BJ (cell line): ENCODE measurements at regions of chr1 and their contacts with region 1.

Region 1: GRCh38 chr1:235077571-235078479 is 50.8 kb downstream of the TOMM20 start:
- DNase-seq: no peak
- H3K4me3 ChIP-seq: no peak overlapping the region
- H3K27me3 ChIP-seq: no peaks in the 10 kb centered on the region
- CTCF ChIP-seq: no peak

Region 2: GRCh38 chr1:234486498-234487448 is 591.1 kb before region 1 on chr1:
- CTCF ChIA-PET with region 1: interaction called, 31 read pairs
- POLR2A ChIA-PET with region 1: no interaction called
- DNase-seq: peak; percentile 49
- H3K4me3 ChIP-seq: no peak overlapping the region
- H3K27me3 ChIP-seq: 0 out of 2 replicates have a peak, but pooled peaks cover 1% of the 10 kb centered on the region
- CTCF ChIP-seq: peak; percentile 71

Region 3: DNA sequence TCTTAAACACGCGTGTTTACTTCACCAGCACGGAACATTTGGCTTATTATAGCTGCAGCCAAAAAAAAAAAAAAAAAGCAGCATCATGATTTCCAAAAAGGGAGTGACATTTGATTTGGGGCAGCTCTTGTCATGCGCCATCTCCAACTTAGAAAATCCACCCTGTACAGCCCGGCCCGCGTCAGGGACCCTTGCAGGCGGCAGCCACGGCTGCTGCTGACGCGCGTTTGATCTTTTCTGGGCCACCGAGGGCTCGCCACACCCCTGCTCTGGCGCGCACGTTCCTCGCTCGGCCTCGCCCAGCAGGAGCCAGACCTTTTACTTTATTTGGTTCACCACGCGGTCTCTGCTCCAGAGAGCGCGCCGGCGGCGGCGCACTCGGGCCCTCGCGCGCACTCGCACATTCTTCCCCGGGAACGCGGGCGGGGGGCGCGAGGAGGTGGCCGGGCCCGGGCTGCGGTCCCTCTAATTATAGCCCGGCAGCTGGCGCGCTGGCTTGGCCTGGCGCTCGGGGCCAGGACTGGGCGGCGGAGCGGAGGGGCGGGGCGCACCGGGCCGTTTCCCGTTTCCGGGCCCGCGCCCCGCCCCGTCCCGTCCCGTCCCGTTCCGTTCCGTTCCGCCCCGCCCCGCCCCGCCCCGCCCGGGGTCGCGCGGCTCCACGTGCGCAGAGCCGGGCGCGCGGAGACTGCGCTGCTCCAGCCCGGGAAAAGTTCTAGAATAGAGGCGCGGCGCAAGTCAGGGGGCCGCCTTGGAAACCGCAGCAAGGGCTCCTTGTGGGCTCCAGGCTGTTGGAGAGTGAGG is 478.0 kb before region 1 on chr1:
- CTCF ChIA-PET with region 1: interaction called, 16 read pairs
- POLR2A ChIA-PET with region 1: no interaction called
- DNase-seq: no peak
- H3K4me3 ChIP-seq: peak overlapping the region; percentile 51
- H3K27me3 ChIP-seq: no peaks in the 10 kb centered on the region
- CTCF ChIP-seq: 0 out of 2 replicates have a peak, but pooled peaks have one; percentile 9

Region 4: DNA sequence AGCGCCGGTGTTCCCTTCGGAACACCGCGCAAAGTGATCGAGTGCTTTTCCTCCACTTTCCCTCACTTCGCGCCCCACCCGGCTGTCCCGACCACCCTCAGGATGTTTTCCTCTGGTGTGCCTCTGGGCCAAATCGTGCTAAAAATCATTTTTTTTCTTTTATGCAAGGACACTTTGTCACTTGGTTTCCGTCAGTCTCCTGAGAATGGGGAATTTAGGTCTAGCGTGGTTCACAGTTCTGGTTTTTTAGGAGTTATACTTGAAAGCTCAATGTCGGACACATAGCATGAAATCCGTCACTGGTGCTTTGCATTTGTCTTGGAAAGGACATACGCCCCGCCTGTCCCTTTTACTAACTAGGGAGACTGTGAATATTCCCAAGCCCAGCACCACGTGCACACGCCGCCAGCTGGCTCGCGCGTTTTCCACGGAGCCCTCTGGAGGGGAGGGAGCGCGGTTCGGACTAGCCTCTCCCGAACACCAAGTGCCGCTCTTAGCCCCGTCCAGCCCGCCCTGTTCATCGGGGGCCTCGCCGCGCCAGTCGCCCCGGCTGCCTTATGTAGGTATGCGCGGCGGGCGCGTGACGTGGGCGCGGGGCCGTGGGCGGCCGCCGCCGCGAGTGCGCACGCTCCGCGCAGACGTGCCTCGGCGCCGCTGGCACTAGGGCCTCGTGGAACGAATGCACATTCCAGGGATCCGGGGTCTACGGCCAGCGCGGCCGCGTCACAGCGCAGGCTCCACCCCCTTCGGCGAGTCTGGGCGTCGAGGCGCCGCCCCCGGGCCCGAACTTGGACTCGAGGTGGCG is 467.3 kb before region 1 on chr1:
- CTCF ChIA-PET with region 1: interaction called, 27 read pairs
- POLR2A ChIA-PET with region 1: no interaction called
- DNase-seq: peak; percentile 68
- H3K4me3 ChIP-seq: peak overlapping the region; percentile 77
- H3K27me3 ChIP-seq: no peaks in the 10 kb centered on the region
- CTCF ChIP-seq: peak; percentile 19; the same call in 1 of the 2 replicates

Region 5: DNA sequence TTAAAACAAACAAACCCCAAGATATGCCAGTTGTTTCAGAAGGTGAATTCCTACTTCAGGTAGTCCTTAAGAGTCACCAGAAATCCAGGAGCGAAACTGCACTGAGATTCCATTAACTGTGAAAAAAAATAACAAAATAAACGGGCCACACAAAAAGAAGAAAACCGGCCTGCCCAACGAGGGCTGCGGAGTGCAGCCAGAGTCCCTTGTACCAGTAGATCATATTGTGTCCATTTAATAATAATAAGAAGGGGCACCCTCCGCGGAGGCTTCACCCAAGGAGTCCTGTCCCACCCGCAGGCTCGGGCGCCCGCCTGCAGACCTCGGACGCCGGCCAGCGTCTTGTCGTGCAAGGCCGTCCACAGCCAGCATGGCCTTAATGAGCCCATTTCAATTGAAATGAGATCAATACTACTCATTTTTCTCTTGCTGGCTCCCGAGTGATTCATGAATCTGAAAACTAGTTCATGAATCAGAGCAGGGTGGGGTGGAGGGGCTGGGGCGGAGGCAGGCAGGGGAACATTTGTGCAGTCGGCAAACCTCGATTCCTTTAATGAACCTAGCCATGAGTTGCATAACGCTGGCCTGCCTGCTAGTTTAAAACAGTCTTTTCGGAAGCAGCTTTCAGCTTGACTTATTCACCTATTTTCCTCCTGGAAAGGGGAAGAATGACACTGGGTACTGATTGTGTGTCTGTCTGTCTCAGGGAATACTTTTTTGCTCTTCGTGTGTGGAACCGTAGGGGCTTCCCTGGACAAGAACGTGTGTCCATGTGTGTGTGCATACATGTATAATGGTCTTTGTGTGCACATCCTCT is 354.7 kb before region 1 on chr1:
- CTCF ChIA-PET with region 1: interaction called, 21 read pairs
- POLR2A ChIA-PET with region 1: interaction called, 3 read pairs
- DNase-seq: peak; percentile 74
- H3K4me3 ChIP-seq: no peak overlapping the region
- H3K27me3 ChIP-seq: no peaks in the 10 kb centered on the region
- CTCF ChIP-seq: no peak

Region 6: GRCh38 chr1:234970731-234971476 is 106.9 kb before region 1 on chr1:
- CTCF ChIA-PET with region 1: interaction called, 12 read pairs
- POLR2A ChIA-PET with region 1: no interaction called
- DNase-seq: peak; percentile 76
- H3K4me3 ChIP-seq: no peak overlapping the region
- H3K27me3 ChIP-seq: no peaks in the 10 kb centered on the region
- CTCF ChIP-seq: no peak

Region 7: GRCh38 chr1:235050911-235051360 is 26.9 kb before region 1 on chr1:
- CTCF ChIA-PET with region 1: no interaction called
- POLR2A ChIA-PET with region 1: no interaction called
- DNase-seq: no peak
- H3K4me3 ChIP-seq: no peak overlapping the region
- H3K27me3 ChIP-seq: no peaks in the 10 kb centered on the region
- CTCF ChIP-seq: no peak